Body of pancreas (tissue), 4 donors: ENCODE measurements at regions of chr1 and their contacts with region 1.

Region 1: DNA sequence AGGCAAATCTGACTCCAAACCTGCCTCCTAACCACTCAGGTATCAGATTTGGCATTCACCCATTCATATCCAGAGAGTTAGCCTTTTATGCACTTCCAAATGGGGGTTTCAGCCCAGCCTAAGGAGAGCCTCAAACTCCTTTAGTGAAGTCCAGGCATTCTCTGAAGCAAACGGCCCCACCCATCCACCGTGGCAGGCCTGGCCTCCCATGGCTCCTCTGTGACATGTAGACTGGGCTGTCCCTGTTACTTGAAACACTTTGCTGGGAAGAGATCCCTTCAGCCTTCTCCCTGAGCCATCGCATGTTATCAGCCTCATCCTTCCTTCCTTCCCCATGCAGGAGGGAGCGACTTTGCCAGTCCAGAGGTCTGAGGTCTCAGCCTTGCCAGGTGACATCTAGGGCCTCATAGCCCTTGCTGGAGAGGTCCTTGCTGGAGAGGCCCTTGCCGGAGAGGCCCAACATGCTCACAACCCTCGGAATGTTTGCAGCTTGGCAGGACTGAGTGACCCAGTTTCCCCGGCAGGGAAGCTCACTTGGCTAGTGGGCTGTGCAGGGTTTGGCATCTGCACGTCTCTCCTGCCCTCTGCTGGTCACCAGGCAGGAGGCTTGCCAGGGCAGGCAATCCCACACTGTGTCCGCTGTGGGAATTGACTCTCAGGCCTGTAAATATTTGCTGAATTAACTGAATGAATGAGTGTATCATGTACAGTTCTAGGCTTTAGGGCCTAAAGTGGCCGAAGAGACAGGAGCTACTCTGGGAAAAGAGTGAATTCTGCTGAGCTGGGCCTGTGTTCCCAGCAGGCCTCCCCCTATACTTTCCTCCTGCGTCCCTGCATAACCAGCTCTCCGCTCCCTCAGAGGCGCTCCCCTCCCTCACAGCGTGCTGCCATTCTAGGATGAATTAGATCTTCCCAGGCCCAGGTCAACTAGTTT is 26.7 kb upstream of the RBM15 start:
- DNase-seq: peak; percentile 84 to 88 (median 85)
- ATAC-seq: peak; percentile 92
- H3K4me3 ChIP-seq: no peak overlapping the region
- H3K27ac ChIP-seq: no peak overlapping the region
- H3K4me1 ChIP-seq: peaks cover 13% of the 10 kb centered on the region
- H3K27me3 ChIP-seq: no peaks in the 10 kb centered on the region
- CTCF ChIP-seq: peak; percentile 92 to 98 (median 97)
- POLR2A ChIP-seq: no peak

Region 2: DNA sequence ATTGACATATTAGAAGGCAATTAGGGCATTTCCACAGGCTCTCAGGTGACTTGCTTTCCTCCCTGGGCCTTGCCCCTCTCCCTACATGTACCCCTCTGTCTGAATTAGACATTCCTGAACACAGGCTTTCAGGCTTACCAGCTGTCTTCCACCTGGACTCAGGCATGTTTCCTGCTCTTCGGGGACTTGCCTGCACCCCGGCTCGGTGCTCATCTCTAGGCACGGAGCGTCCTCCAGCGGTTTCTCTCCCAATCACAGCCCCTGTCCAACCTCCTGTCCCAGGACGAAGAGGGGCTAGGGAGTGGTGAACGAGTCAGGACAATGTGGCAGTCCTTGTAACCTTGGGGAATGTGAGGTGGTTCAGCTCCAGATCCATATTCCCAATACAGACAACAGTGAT is 142.7 kb after region 1 on chr1:
- intact Hi-C with region 1: loop called (anchors 10 kb)
- DNase-seq: no peak
- ATAC-seq: no peak
- H3K4me3 ChIP-seq: no peak overlapping the region
- H3K27ac ChIP-seq: no peak overlapping the region
- H3K4me1 ChIP-seq: no peaks in the 10 kb centered on the region
- H3K27me3 ChIP-seq: no peaks in the 10 kb centered on the region
- CTCF ChIP-seq: no peak
- POLR2A ChIP-seq: no peak